Activated T-helper 1 cell treated with anti-CD3 and anti-CD28 coated beads, Interleukin-12 subunit alpha, Interleukin-12 subunit beta, Interleukin-2, Interleukin-4 antibody, amounts not matched to agents 30 ng/mL and 10 ng/mL and 1 ng/mL, durations not matched to agents 14 hours and 24 hours and 36 hours (primary cell): ENCODE measurements at regions of chr13 and their contacts with region 1.

Region 1: GRCh38 chr13:76991796-76992547 is at the start of gene CLN5:
- DNase-seq: peak; percentile 95
- H3K4me3 Mint-ChIP-seq: peak within 1 kb of the TSS; percentile 97
- H3K27ac Mint-ChIP-seq: peak within 1 kb of the TSS; percentile 98
- H3K4me1 Mint-ChIP-seq: peaks cover 42% of the 10 kb centered on the region
- H3K27me3 Mint-ChIP-seq: peaks cover 7% of the 10 kb centered on the region
- total RNA-seq, gene CLN5: 14.2 and 16.9 TPM in 2 replicates

Region 2: DNA sequence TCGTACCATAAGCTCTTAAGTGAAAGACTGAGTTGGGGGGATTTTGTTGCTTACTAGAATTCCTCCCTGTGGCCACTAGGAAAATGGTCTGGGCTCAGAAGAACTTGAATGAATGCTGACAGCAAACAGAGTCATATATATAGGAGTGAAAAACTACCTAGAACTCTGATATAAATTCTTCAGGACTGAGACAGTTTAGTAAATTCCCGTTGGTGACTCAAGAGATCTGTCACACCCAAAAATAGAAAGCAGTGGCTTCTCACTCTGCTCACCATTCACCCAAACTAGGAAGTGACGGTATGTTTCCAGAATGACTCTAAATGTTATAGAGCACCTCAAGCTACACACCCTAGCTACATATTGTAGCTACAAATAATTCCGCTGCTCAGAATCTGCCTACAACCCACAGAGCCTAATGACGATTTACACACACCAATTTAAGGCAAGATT is 1626.2 kb before region 1 on chr13:
- intact Hi-C with region 1: loop called (anchors 5 kb)
- DNase-seq: peak; percentile 43
- H3K4me3 Mint-ChIP-seq: peak overlapping the region; percentile 65
- H3K27ac Mint-ChIP-seq: peak overlapping the region; percentile 96
- H3K4me1 Mint-ChIP-seq: peaks cover 57% of the 10 kb centered on the region
- H3K27me3 Mint-ChIP-seq: no peaks in the 10 kb centered on the region

Region 3: GRCh38 chr13:76980075-76980718 is 11.8 kb before region 1 on chr13:
- intact Hi-C with region 1: loop called (anchors 1 kb)
- DNase-seq: peak; percentile 73
- H3K4me3 Mint-ChIP-seq: no peak overlapping the region
- H3K27ac Mint-ChIP-seq: no peak overlapping the region
- H3K4me1 Mint-ChIP-seq: peaks cover 11% of the 10 kb centered on the region
- H3K27me3 Mint-ChIP-seq: peaks cover 29% of the 10 kb centered on the region

Region 4: GRCh38 chr13:77009011-77009410 is 17.0 kb after region 1 on chr13:
- intact Hi-C with region 1: loop called (anchors 2 kb)
- DNase-seq: no peak
- H3K4me3 Mint-ChIP-seq: no peak overlapping the region
- H3K27ac Mint-ChIP-seq: no peak overlapping the region
- H3K4me1 Mint-ChIP-seq: peaks cover 26% of the 10 kb centered on the region
- H3K27me3 Mint-ChIP-seq: no peaks in the 10 kb centered on the region

Region 5: DNA sequence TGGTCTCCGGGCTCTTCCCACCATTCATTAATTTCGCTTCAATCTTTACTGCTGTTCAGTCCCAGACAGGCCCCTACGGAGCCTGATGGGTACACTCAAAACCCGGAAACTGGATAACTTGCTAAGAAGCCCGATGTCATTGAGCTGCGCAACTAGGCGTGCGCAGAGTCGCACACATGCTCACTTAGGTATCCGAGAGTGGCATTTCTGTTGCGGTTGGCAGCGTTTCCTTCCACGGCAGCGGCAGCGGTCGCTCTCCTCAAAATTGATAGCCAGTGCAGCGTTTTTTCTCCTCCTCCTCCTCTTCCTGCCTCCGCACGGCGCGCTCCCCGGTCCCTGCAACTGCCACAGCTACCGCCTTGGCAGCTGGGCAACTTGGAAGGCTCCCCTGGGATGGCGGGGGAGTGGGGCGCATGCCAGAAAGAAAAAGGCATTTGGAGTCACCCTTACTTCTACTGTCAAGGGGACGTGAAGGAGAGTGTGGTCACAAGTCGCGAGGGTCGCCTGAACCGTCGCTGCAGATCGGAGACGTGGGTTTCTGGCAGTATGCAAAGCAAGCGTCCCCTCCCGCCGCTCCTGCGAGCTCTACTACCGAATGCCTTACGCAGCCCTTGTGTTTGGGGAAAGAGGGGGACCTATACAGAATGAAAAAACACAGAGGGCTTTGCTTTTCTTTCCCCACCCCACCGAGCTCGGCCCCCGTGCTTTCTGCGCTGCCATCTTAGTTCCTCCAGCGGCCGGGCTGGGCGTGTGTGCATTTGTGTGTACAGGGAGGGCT is 337.4 kb after region 1 on chr13:
- intact Hi-C with region 1: loop called (anchors 1 kb)
- DNase-seq: peak; percentile 88
- H3K4me3 Mint-ChIP-seq: peak overlapping the region; percentile 88
- H3K27ac Mint-ChIP-seq: peak overlapping the region; percentile 93
- H3K4me1 Mint-ChIP-seq: peaks cover 38% of the 10 kb centered on the region
- H3K27me3 Mint-ChIP-seq: peaks cover 5% of the 10 kb centered on the region

Region 6: GRCh38 chr13:77554069-77554468 is 562.1 kb after region 1 on chr13:
- intact Hi-C with region 1: loop called (anchors 10 kb)
- DNase-seq: no peak
- H3K4me3 Mint-ChIP-seq: no peak overlapping the region
- H3K27ac Mint-ChIP-seq: no peak overlapping the region
- H3K4me1 Mint-ChIP-seq: peaks cover 7% of the 10 kb centered on the region
- H3K27me3 Mint-ChIP-seq: peaks cover 6% of the 10 kb centered on the region

Region 7: GRCh38 chr13:78658635-78659449 is 1666.9 kb after region 1 on chr13 and contains the start of gene OBI1:
- intact Hi-C with region 1: loop called (anchors 5 kb)
- DNase-seq: peak; percentile 84
- H3K4me3 Mint-ChIP-seq: peak within 1 kb of the TSS; percentile 96
- H3K27ac Mint-ChIP-seq: peak within 1 kb of the TSS; percentile 97
- H3K4me1 Mint-ChIP-seq: peaks cover 36% of the 10 kb centered on the region
- H3K27me3 Mint-ChIP-seq: no peaks in the 10 kb centered on the region
- total RNA-seq, gene OBI1: 20.0 and 21.1 TPM in 2 replicates